Natural killer cell (primary cell): ENCODE measurements at regions of chr16 and their contacts with region 1.

Region 1: GRCh38 chr16:81737885-81738786 is 41.0 kb upstream of the PLCG2 start:
- DNase-seq: peak; percentile 80 to 93
- ATAC-seq: peak; percentile 89 to 97 (median 96)
- H3K4me3 ChIP-seq: peak overlapping the region; percentile 11
- H3K4me3 Mint-ChIP-seq: peak overlapping the region; percentile 58
- H3K27ac ChIP-seq: no peak overlapping the region
- H3K27ac Mint-ChIP-seq: peak overlapping the region in 1 of 2 donors; percentile 75
- H3K4me1 ChIP-seq: peaks cover 35% of the 10 kb centered on the region
- H3K4me1 Mint-ChIP-seq: peaks cover 7 to 19% of the 10 kb centered on the region in 2 donors
- H3K27me3 ChIP-seq: no peaks in the 10 kb centered on the region
- H3K27me3 Mint-ChIP-seq: no peaks in the 10 kb centered on the region
- CTCF ChIP-seq: peak; percentile 88

Region 2: DNA sequence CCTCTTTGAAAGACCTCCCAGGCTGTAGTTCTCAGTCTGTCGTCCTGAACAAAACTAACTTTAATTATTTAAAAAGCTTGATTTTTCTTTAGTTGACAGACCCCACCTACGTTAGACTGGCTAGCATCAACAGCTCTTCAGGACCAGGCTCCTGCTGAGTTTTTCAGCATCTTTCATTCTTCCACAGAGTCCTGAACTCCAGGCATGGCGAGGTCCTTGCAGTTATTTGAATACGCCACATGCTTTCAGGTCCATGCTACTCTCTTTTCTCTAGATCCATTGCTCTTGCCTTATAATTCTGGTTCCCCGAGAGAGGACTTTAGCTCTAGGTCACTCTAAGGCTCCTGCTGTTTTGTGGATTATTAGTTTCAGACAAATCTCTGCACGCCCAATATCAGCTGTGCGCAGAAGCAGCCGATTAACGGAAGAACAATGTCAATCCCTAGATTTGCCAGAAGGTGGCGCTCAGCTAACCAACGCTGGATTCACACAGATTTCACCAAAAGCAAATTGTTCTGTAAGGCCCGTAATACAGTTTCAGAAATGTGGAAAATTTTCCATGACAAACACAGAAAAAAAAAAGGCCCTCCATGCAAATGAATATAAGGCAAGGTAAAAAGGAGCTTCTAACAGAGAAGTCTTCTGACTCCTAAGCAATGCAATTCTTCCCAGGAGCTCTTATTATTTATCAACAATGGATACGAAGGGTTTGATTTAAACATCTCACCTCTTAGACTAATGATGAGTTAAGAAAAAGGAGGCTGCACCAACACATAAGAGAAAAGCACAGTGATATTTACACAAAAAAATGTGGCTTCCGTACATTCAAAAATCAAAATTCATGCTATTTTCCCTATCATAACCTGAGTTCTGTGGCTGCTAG is 533.1 kb before region 1 on chr16:
- intact Hi-C with region 1: loop called (anchors 1 kb)
- DNase-seq: peak; percentile 32 to 72
- ATAC-seq: peak in 1 of 3 donors; percentile 47
- H3K4me3 ChIP-seq: no peak overlapping the region
- H3K4me3 Mint-ChIP-seq: no peak overlapping the region
- H3K27ac ChIP-seq: no peak overlapping the region
- H3K27ac Mint-ChIP-seq: no peak overlapping the region
- H3K4me1 ChIP-seq: no peaks in the 10 kb centered on the region
- H3K4me1 Mint-ChIP-seq: peaks cover 5 to 6% of the 10 kb centered on the region in 2 donors
- H3K27me3 ChIP-seq: peaks cover 3% of the 10 kb centered on the region
- H3K27me3 Mint-ChIP-seq: peaks cover 6 to 9% of the 10 kb centered on the region in 2 donors
- CTCF ChIP-seq: peak; percentile 88

Region 3: GRCh38 chr16:81261049-81261648 is 477.0 kb before region 1 on chr16:
- intact Hi-C with region 1: loop called (anchors 5 kb)
- DNase-seq: peak in 1 of 2 donors; percentile 49
- ATAC-seq: no peak
- H3K4me3 ChIP-seq: no peak overlapping the region
- H3K4me3 Mint-ChIP-seq: no peak overlapping the region
- H3K27ac ChIP-seq: no peak overlapping the region
- H3K27ac Mint-ChIP-seq: no peak overlapping the region
- H3K4me1 ChIP-seq: no peaks in the 10 kb centered on the region
- H3K4me1 Mint-ChIP-seq: no peaks in the 10 kb centered on the region
- H3K27me3 ChIP-seq: no peaks in the 10 kb centered on the region
- H3K27me3 Mint-ChIP-seq: peaks cover 0 to 5% of the 10 kb centered on the region in 2 donors
- CTCF ChIP-seq: peak; percentile 65